Psoas muscle (tissue), 8 donors: ENCODE measurements at regions of chr6 and their contacts with region 1.

Region 1: GRCh38 chr6:40587240-40588069 is at the start of gene LRFN2:
- DNase-seq: peak; percentile 75 to 86
- ATAC-seq: peak; percentile 96 to 98 (median 96)
- H3K4me3 ChIP-seq: peak within 1 kb of the TSS; percentile 62
- H3K27ac ChIP-seq: peak within 1 kb of the TSS; percentile 55
- H3K4me1 ChIP-seq: peaks cover 6% of the 10 kb centered on the region
- H3K27me3 ChIP-seq: peaks cover 0 to 2% (median 0%) of the 10 kb centered on the region in 3 donors
- CTCF ChIP-seq: peak; percentile 65
- total RNA-seq, gene LRFN2: not detected

Region 2: GRCh38 chr6:39980839-39981580 is 606.4 kb before region 1 on chr6:
- intact Hi-C with region 1: loop called (anchors 5 to 10 kb)
- DNase-seq: no peak
- ATAC-seq: peak; percentile 77 to 96 (median 85)
- H3K4me3 ChIP-seq: no peak overlapping the region
- H3K27ac ChIP-seq: no peak overlapping the region
- H3K4me1 ChIP-seq: peaks cover 14% of the 10 kb centered on the region
- H3K27me3 ChIP-seq: no peaks in the 10 kb centered on the region
- CTCF ChIP-seq: peak; percentile 48

Region 3: DNA sequence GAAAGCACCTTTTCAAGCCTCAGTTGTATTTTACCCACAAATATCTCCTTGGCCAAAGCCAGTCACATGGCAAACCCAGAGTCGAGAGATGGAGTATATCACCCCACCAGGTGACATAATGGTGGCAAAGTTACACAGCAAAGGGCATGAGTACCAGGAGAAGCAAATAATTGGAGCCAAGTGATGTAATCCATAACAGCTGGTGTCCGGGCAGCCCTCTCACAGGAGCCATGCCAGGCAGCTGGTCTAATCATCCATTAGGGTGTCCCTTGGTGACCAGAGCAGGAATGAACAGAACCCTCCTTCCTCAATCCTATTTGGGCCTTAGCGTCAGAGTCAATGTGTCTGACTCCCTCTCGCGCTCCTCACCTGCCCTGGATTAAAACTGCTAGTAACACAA is 272.4 kb before region 1 on chr6:
- intact Hi-C with region 1: no loop called
- DNase-seq: peak; percentile 31 to 81
- ATAC-seq: peak; percentile 93 to 98 (median 96)
- H3K4me3 ChIP-seq: no peak overlapping the region
- H3K27ac ChIP-seq: peak overlapping the region; percentile 55
- H3K4me1 ChIP-seq: peaks cover 15% of the 10 kb centered on the region
- H3K27me3 ChIP-seq: no peaks in the 10 kb centered on the region
- CTCF ChIP-seq: no peak

Region 4: DNA sequence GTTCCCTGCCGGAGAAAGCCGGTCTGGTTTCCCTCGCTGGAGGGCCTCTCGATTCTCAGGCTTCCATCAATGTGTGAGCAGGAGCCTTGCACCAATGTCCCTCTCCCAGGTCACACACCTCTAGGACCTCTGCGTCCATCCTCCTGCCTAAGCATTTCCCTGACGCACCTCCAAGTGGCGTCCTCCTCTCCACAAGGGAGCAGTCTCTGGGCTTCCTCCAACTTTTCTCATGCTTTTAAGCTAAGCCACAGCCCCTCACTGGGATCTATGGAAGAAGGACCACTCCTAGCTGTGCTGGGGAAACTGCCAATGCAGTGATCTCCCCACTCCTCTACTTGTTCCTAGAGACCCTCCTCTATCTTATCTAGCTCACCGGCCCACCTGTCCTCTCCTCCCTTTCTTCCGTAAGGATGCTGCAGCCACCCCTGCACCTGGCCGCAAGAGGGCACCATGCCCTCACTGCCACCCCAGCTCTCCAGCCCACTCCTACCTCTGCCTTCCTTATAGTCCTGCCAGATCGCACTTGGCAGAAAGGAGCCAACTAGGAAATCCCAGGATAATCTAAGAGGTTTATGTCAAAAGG is 259.0 kb before region 1 on chr6:
- intact Hi-C with region 1: loop called (anchors 5 to 10 kb)
- DNase-seq: no peak
- ATAC-seq: peak; percentile 44 to 74 (median 71)
- H3K4me3 ChIP-seq: no peak overlapping the region
- H3K27ac ChIP-seq: no peak overlapping the region
- H3K4me1 ChIP-seq: peaks cover 9% of the 10 kb centered on the region
- H3K27me3 ChIP-seq: no peaks in the 10 kb centered on the region
- CTCF ChIP-seq: peak; percentile 61

Region 5: DNA sequence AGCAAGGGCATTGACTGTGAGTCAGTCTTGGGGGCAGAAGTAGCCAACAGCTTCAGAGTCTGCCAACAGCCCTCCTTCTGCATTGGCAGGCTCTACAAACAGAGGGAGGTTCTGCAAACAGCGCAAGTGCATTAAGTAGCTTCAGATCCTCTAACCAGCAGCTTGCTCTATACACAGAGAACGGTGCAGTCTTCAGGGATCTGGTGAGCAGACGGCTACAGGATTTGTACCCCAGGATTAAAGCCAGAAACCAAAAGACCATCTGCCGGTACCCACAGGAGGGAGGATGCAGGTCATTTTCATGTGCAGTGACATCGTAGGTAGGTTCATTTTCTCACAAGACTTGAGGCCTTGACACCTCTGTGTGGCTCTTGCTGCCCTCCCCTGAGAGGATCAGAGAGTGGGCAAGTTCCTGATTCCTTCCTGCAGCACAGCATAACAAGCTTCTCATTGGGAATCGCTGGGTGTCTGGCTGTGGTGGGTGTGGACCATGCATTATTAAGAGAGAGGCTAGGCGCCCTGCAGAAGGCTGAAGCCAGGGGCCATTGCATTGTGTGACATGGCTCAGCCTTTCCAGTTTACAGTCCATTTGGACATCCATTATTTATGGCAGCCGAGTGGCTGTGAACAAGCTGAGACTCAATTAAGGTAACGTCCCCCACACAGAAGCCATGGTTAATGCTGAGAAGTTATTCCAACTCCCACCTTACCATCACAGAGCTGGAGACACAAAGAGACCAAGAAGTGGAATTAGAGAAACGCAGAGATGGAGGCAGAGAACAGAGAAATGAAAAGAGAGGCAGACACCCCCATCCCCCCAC is 250.3 kb before region 1 on chr6:
- intact Hi-C with region 1: loop called in 1 of 2 experiments (anchors 10 kb)
- DNase-seq: no peak
- ATAC-seq: no peak
- H3K4me3 ChIP-seq: no peak overlapping the region
- H3K27ac ChIP-seq: no peak overlapping the region
- H3K4me1 ChIP-seq: no peaks in the 10 kb centered on the region
- H3K27me3 ChIP-seq: no peaks in the 10 kb centered on the region
- CTCF ChIP-seq: no peak

Region 6: GRCh38 chr6:40419372-40419771 is 168.1 kb before region 1 on chr6:
- intact Hi-C with region 1: loop called in 1 of 2 experiments (anchors 10 kb)
- DNase-seq: peak; percentile 27 to 70
- ATAC-seq: peak; percentile 89 to 91 (median 90)
- H3K4me3 ChIP-seq: no peak overlapping the region
- H3K27ac ChIP-seq: no peak overlapping the region
- H3K4me1 ChIP-seq: peaks cover 27% of the 10 kb centered on the region
- H3K27me3 ChIP-seq: no peaks in the 10 kb centered on the region
- CTCF ChIP-seq: no peak